Activated naive CD8-positive, alpha-beta T cell treated with anti-CD3 and anti-CD28 coated beads, Interleukin-2, amount 10 ng/mL, durations not matched to agents 7 days and 5 days (primary cell): ENCODE measurements at regions of chr3 and their contacts with region 1.

Region 1: GRCh38 chr3:183635431-183636220 is at the start of gene KLHL24:
- DNase-seq: peak; percentile 88
- ATAC-seq: peak; percentile 76
- H3K4me3 Mint-ChIP-seq: peak within 1 kb of the TSS; percentile 85
- H3K27ac Mint-ChIP-seq: peak within 1 kb of the TSS; percentile 90
- H3K4me1 Mint-ChIP-seq: peaks cover 20% of the 10 kb centered on the region
- H3K27me3 Mint-ChIP-seq: no peaks in the 10 kb centered on the region
- total RNA-seq, gene KLHL24: 37.0 to 45.4 TPM

Region 2: DNA sequence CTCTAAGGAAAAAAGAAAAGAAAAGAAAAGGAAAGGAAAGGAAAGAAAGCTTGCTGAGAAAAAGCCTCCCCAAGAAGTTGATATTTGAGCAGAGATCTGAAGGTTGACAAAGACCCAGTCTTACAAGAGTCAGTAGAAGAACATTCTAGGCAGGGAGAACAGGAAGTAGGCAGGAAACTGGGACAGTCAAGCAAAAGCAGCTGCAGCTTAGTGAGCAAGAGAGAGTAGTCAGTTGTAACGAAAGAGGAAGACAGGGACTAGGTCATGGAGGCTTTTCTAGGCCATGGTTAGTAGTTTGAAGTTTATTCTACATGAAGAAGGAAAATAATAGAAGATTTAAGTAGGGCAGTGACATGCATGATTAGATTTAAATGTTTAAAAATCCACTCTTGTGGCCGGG is 48.3 kb before region 1 on chr3:
- POLR2A ChIA-PET with region 1: interaction called, 12 read pairs
- DNase-seq: no peak
- ATAC-seq: no peak
- H3K4me3 Mint-ChIP-seq: peak overlapping the region; percentile 2
- H3K27ac Mint-ChIP-seq: peak overlapping the region; percentile 74
- H3K4me1 Mint-ChIP-seq: peaks cover 27% of the 10 kb centered on the region
- H3K27me3 Mint-ChIP-seq: no peaks in the 10 kb centered on the region

Region 3: DNA sequence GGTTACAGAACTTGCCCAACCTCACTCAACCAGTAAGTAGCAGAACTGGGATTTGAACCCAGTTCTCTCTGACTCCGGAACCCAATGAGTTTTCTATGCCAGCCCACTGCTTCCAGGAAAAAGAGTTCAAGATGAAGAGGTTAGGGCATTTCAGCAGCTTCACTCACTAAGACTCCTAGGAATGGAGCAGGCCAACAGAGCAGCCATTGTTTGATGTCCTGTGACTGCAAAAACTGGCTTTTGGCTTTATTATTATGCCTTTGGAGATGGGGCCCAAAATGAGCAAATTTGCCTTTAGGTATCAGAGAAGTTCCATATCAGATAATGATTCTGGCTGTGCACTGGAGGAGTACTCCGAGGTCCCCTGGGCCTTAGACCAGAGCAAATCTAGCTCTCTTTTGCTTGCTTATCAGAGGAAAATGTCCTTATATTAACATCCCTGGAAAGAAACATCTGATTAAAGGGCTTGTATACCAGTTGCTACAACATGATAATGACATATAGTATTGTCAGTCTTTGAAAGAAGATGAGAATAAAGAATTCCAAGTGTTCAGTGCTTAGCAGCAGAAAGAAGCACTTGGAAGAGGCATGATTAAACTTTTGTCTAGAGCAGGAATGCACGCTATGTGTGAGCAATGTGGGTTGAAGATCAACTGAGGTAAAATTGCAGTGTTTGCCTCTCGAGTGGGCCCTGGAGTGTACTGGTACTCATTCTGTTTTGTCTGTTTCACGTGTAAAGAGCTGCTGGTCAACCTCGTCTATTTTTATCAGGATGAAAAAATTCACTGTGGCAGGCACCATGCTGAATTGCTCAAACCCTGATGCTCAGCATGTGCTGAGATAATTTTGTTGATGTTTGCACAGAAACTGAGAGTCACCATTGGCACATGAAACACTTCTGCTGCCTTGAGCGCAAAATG is 22.0 kb before region 1 on chr3:
- POLR2A ChIA-PET with region 1: no interaction called
- DNase-seq: no peak
- ATAC-seq: no peak
- H3K4me3 Mint-ChIP-seq: no peak overlapping the region
- H3K27ac Mint-ChIP-seq: no peak overlapping the region
- H3K4me1 Mint-ChIP-seq: no peaks in the 10 kb centered on the region
- H3K27me3 Mint-ChIP-seq: peaks cover 1% of the 10 kb centered on the region

Region 4: DNA sequence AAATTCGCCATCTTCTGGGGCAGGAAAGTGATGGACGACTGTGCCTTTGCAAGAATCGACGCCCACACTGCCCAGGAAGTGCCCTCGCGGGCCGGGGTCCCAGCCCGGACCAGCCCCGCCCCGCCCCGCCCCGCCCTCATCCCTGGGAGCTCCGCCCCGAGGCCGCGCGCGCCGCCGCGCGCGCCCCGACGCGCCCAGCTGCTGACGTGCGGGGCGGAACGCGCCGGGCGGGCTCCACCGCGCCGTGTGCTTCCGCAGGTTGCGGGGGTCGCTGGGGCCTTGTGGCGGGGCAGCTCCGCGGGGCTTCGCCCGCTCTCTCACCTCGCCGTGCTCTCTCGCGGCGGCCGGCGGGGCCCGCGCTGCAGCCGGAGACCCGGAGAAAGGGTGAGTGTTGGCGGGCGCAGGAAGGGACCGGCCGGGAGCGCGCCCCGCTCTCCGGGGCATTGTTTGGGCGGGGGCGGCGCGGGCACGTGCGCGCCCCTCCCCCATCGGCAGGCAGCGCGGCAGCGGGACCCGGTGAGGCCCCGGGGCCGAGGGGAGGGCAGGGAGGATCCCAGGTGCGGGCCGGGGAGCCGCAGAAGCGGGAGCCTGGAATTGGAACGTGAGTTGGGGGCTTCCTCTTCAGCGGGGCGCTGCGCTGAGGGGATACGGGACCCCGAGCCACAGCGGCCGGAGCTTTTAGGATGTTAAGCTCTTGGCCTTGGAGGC is 62.1 kb after region 1 on chr3 and contains the start of gene YEATS2:
- POLR2A ChIA-PET with region 1: interaction called, 53 read pairs
- DNase-seq: peak; percentile 85
- ATAC-seq: peak; percentile 83
- H3K4me3 Mint-ChIP-seq: peak within 1 kb of the TSS; percentile 90
- H3K27ac Mint-ChIP-seq: peak within 1 kb of the TSS; percentile 90
- H3K4me1 Mint-ChIP-seq: peaks cover 31% of the 10 kb centered on the region
- H3K27me3 Mint-ChIP-seq: no peaks in the 10 kb centered on the region
- total RNA-seq, gene YEATS2: 49.7 to 52.7 TPM